RWPE1 (cell line): ENCODE measurements at regions of chr10 and their contacts with region 1.

Region 1: DNA sequence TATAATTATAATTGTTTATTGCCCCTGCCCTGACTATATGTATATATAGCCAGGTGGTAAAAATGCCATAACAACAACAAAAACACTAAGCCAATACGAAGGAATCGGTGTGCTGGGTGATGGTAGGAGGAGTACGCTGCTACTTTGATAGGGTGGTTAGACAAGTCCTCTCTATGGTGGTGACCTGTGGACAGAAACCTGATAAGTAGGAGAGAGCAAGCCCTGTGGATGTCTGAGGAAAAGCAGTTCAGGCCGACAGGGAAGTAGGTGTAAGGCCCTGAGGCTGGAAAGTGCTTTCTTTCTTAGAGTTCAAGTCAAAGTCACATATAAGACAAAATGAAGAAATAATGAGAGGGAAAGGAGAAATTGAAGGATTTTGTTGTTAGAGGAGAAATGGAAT is 823.8 kb upstream of the CELF2 start:
- DNase-seq: no peak
- H3K27ac ChIP-seq: no peak overlapping the region
- CTCF ChIP-seq: no peak

Region 2: GRCh38 chr10:10038348-10038747 is 155.5 kb before region 1 on chr10:
- CTCF ChIA-PET with region 1: no interaction called
- POLR2A ChIA-PET with region 1: no interaction called
- DNase-seq: no peak
- H3K27ac ChIP-seq: no peak overlapping the region
- CTCF ChIP-seq: no peak

Region 3: GRCh38 chr10:10270126-10271050 is 76.5 kb after region 1 on chr10:
- CTCF ChIA-PET with region 1: interaction called, 10 read pairs
- POLR2A ChIA-PET with region 1: no interaction called
- DNase-seq: no peak
- H3K27ac ChIP-seq: no peak overlapping the region
- CTCF ChIP-seq: no peak

Region 4: GRCh38 chr10:10320956-10321355 is 127.1 kb after region 1 on chr10:
- CTCF ChIA-PET with region 1: no interaction called
- POLR2A ChIA-PET with region 1: no interaction called
- DNase-seq: peak; percentile 55
- H3K27ac ChIP-seq: no peak overlapping the region
- CTCF ChIP-seq: no peak